ENCODE measurements at regions of chr15 and their contacts with region 1.

Region 1: DNA sequence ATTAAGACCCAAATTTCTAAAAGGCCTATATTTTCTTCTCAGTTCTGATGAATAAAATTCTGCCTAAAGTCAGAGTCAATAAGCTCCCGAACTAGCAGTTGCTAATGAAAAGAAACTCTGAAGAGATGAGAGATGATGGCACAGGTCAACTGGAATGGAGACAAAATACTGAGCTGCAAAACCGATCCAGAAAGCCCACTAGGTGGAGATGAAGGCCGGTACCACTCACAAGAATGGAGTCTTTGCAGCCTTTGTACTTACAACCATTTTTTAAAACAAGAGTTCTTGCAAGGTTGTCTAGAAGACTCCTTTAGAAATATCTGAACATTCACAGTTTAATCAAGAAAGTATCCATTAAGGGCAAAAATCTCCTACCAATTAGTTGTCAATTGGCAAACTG is 119.9 kb upstream of the TJP1 start:
- DNase-seq: no peak
- H3K4me3 ChIP-seq: no peak overlapping the region
- H3K27ac ChIP-seq: no peak overlapping the region
- H3K4me1 ChIP-seq: no peaks in the 10 kb centered on the region
- H3K27me3 ChIP-seq: no peaks in the 10 kb centered on the region
- CTCF ChIP-seq: no peak

Region 2: DNA sequence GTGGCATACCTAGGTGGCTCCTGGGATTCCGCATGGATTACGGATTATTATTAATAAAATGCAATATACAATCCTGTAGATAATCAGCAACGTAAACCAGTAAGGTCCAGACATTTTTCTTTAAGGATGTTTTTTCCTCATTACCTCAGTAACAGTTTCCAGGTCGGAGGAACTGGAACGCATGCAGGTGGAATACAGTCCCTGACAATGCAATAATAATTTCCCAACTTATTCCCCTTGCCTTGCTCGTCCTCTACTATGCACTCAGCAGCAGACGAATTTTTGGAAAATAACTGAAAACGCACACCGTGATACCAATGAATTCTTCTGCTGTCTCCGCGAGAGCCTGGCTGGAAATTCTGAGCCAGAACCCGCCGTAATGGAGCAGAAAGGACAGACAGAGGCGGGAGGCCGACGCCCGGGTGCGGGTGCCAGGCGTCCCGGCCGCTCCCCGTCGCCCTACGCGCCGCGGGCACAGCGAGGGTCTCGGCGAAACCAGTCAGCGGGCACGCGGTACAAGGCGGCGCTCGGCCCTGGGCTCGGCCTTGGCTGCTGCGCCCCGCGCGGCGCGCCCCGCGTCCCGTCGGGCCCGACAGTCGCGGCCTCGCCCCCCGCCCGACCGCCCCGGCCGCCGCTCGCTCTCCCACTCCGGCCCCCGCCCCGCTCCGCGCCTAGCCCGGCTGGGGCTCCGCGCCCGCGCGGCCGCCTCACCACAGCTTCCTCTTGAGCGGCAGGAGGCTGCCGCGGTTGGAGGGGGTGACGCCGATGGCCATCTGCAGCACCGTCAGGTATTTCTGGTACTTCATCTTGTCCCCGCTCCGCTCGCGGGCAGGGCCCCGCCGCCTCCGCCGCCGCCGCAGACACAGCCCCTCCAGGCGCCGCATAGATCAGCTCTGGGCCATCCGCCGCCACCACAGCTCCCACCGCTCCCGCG is 26.1 kb after region 1 on chr15:
- intact Hi-C with region 1: no loop called
- DNase-seq: no peak
- H3K4me3 ChIP-seq: peak overlapping the region; percentile 50 to 69
- H3K27ac ChIP-seq: no peak overlapping the region
- H3K4me1 ChIP-seq: no peaks in the 10 kb centered on the region
- H3K27me3 ChIP-seq: no peaks in the 10 kb centered on the region
- CTCF ChIP-seq: no peak

Region 3: GRCh38 chr15:29990035-29990434 is 47.9 kb after region 1 on chr15:
- intact Hi-C with region 1: loop called (anchors 5 kb)
- DNase-seq: no peak
- H3K4me3 ChIP-seq: no peak overlapping the region
- H3K27ac ChIP-seq: no peak overlapping the region
- H3K4me1 ChIP-seq: peaks cover 0 to 3% of the 10 kb centered on the region in 2 donors
- H3K27me3 ChIP-seq: no peaks in the 10 kb centered on the region
- CTCF ChIP-seq: no peak

Region 4: GRCh38 chr15:30023798-30024295 is 81.7 kb after region 1 on chr15:
- intact Hi-C with region 1: no loop called
- DNase-seq: no peak
- H3K4me3 ChIP-seq: no peak overlapping the region
- H3K27ac ChIP-seq: no peak overlapping the region
- H3K4me1 ChIP-seq: no peaks in the 10 kb centered on the region
- H3K27me3 ChIP-seq: no peaks in the 10 kb centered on the region
- CTCF ChIP-seq: no peak

Region 5: GRCh38 chr15:30043211-30043655 is 101.1 kb after region 1 on chr15:
- intact Hi-C with region 1: loop called (anchors 2 kb)
- DNase-seq: no peak
- H3K4me3 ChIP-seq: no peak overlapping the region
- H3K27ac ChIP-seq: no peak overlapping the region
- H3K4me1 ChIP-seq: no peaks in the 10 kb centered on the region
- H3K27me3 ChIP-seq: no peaks in the 10 kb centered on the region
- CTCF ChIP-seq: peak in 2 of 3 experiments; percentile 14 to 44